ENCODE measurements at regions of chr12 and their contacts with region 1.

Region 1: DNA sequence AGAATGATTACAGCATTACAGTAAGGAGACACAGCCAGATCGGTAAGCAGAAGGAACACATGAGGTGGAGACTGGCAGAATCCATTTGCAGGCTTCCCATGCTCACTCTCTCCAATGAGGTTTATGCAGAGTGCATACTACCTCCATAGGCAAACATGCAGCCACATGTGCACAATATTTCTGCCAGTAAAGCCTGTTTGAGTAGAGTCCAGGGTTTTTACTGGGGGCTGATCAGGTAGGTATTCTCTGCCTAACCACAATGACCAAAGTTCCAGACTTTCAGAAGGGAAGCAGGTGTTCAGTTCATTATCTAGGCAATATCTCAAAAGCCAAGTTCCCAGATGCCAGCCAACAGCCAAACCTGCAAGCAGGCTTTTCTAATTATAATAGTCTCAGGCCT is 31.1 kb downstream of the INTS13 start:
- DNase-seq: no peak
- ATAC-seq: no peak
- H3K4me3 Mint-ChIP-seq: no peak overlapping the region
- H3K27ac Mint-ChIP-seq: no peak overlapping the region
- H3K4me1 Mint-ChIP-seq: no peaks in the 10 kb centered on the region
- H3K27me3 Mint-ChIP-seq: no peaks in the 10 kb centered on the region
- CTCF ChIP-seq: no peak

Region 2: GRCh38 chr12:26919216-26919555 is 12.5 kb after region 1 on chr12:
- CTCF ChIA-PET with region 1: interaction called, 4 read pairs
- POLR2A ChIA-PET with region 1: no interaction called
- intact Hi-C with region 1: loop called (anchors 2 kb)
- DNase-seq: no peak
- ATAC-seq: no peak
- H3K4me3 Mint-ChIP-seq: no peak overlapping the region
- H3K27ac Mint-ChIP-seq: no peak overlapping the region
- H3K4me1 Mint-ChIP-seq: no peaks in the 10 kb centered on the region
- H3K27me3 Mint-ChIP-seq: no peaks in the 10 kb centered on the region
- CTCF ChIP-seq: no peak

Measured in activated B cell treated with CpG ODN at 0.5 μM for 24 hours (primary cell).